Gastrocnemius medialis (tissue), 4 donors: ENCODE measurements at regions of chr4 and their contacts with region 1.

Region 1: DNA sequence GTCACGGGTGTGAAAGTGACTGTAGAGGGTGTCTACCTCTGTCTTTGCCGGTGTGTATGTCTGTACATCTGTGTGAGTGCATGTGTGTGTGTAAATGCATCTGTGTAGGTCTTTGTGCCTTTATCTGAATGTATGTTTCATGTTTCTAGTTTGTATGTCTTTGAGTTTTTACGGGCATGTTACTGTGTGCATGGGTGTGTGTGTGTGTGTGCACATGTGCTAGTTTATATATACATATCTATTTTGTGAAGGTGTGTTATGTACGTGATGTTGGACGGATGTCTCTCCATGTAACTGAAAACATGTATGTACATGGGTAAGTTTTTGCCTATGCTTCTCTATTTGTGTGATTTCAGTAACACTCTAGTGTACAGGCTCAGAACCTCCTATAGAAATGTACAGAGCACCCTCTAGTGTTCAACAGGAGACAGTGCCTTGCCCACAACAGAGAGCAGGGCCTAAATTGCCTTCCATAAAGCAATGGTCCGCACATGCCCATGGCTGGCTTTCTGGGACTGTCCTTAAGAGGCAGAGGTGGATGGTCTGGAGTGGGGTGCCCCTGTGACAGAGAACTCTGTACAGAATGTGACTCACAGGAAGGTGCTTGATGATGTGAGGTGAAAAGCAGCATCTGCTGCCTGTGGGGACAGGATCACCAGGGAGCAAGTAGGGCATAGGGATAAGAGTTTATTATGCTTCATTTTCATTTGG is 343.5 kb downstream of the RAPGEF2 start:
- DNase-seq: peak; percentile 16 to 35
- ATAC-seq: peak; percentile 96 to 100
- H3K4me3 ChIP-seq: no peak overlapping the region
- H3K27ac ChIP-seq: peak overlapping the region in 1 of 4 donors; percentile 13
- H3K4me1 ChIP-seq: peaks cover 0 to 5% of the 10 kb centered on the region in 2 donors
- H3K27me3 ChIP-seq: no peaks in the 10 kb centered on the region
- CTCF ChIP-seq: peak; percentile 62 to 85 (median 79)
- POLR2A ChIP-seq: no peak

Region 2: GRCh38 chr4:158253350-158253980 is 1193.0 kb before region 1 on chr4:
- in situ Hi-C with region 1: no loop called
- intact Hi-C with region 1: loop called (anchors 10 kb)
- DNase-seq: no peak
- ATAC-seq: peak; percentile 56 to 62
- H3K4me3 ChIP-seq: no peak overlapping the region
- H3K27ac ChIP-seq: no peak overlapping the region
- H3K4me1 ChIP-seq: no peaks in the 10 kb centered on the region
- H3K27me3 ChIP-seq: no peaks in the 10 kb centered on the region
- CTCF ChIP-seq: peak in 4 of 5 experiments; percentile 20 to 54 (median 42)
- POLR2A ChIP-seq: no peak

Region 3: DNA sequence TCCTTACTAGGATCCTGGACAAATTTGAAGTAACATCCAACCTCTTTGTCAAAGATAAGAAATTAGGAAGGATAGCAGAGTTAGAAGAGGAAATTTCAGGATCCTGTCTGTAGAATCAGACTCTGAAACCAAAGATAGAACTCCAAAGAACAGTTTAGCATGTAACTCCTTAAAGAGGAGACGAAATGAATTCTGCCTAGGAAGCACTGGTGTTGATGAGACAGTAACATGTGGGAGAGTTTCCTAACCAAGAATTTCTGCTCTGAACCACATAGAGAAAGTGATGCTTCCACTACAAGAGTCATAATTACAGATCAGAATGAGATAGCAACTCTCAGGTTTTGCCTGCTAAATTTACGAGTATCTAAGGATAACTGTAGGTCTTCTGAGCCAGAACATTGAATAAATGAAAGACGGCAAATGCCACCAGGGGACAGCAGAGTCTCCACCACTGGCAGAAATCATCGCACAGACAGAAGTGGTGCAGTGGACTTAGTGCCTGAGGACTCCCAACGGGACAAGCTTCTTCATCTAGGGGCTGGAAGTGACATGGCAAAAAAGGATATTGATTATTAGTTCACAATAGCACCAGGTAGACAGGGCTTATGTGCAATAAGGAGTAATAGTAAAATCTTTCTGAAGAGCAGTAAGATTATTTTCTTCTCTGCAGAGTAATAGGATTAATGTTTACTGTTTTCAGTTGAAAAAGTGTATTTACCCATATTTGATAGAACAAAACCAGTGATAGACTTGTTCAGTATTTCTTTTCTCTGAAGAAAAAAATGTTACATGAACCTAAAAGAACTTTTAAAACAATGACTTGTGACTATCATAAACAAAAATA is 716.5 kb before region 1 on chr4:
- in situ Hi-C with region 1: loop called in 3 of 4 experiments (anchors 25 kb)
- intact Hi-C with region 1: no loop called
- DNase-seq: peak; percentile 10 to 55
- ATAC-seq: peak; percentile 87 to 97
- H3K4me3 ChIP-seq: no peak overlapping the region
- H3K27ac ChIP-seq: no peak overlapping the region
- H3K4me1 ChIP-seq: no peaks in the 10 kb centered on the region
- H3K27me3 ChIP-seq: no peaks in the 10 kb centered on the region
- CTCF ChIP-seq: peak; percentile 82 to 95 (median 91)
- POLR2A ChIP-seq: no peak

Region 4: DNA sequence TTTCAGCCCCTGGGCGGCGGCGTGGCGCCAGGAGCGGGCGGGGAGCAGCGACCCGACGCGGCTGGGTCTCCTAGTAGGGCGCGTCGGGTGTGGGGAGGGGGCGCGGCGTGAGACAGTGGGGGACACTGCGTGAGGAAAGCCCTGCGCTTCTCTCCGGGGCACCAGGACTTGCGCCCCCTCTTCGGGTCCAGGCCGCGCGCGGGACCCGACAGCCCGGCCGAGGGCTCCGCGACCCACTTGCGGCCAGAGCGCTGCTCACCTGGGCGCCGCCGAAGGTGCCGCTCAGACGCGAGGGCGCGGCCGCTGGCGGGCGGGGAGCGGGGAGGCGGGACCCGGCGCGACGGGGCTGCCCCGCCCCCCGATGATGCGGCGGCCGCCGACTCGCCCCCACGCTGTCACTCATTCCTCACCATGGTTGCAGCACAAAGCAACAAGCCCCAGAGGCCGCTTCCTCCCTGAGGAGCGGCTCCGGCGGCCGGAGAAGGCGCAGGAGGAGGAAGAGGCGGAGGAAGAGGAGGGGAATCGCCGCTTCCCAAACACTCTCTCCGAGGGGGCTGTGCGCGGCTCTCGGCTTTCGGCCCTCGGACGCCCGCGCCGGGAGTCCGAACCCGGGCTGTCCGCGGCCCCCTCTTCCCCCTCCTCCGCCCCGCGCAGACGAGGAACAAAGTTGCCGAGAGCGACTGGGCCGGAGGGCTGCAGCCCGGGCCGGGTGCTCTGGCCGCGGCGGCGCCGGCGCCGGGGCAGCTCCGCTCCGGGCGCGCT is 343.6 kb before region 1 on chr4 and contains the start of gene RAPGEF2:
- in situ Hi-C with region 1: no loop called
- intact Hi-C with region 1: loop called (anchors 10 kb)
- DNase-seq: peak; percentile 90 to 92
- ATAC-seq: peak; percentile 93
- H3K4me3 ChIP-seq: peak within 1 kb of the TSS; percentile 67 to 97 (median 93)
- H3K27ac ChIP-seq: peak within 1 kb of the TSS; percentile 93 to 96 (median 95)
- H3K4me1 ChIP-seq: peaks cover 35 to 43% of the 10 kb centered on the region in 2 donors
- H3K27me3 ChIP-seq: no peaks in the 10 kb centered on the region
- CTCF ChIP-seq: peak in 1 of 5 experiments; percentile 10
- POLR2A ChIP-seq: peak; percentile 95 to 98
- total RNA-seq, gene RAPGEF2: 32.9 to 42.3 (median 38.7) TPM

Region 5: GRCh38 chr4:159273141-159273438 is 173.3 kb before region 1 on chr4:
- in situ Hi-C with region 1: no loop called
- intact Hi-C with region 1: loop called (anchors 10 kb)
- DNase-seq: no peak
- ATAC-seq: peak in 1 of 2 donors; percentile 22
- H3K4me3 ChIP-seq: no peak overlapping the region
- H3K27ac ChIP-seq: peak overlapping the region; percentile 19 to 61 (median 39)
- H3K4me1 ChIP-seq: peaks cover 48 to 49% of the 10 kb centered on the region in 2 donors
- H3K27me3 ChIP-seq: no peaks in the 10 kb centered on the region
- CTCF ChIP-seq: no peak
- POLR2A ChIP-seq: no peak

Region 6: DNA sequence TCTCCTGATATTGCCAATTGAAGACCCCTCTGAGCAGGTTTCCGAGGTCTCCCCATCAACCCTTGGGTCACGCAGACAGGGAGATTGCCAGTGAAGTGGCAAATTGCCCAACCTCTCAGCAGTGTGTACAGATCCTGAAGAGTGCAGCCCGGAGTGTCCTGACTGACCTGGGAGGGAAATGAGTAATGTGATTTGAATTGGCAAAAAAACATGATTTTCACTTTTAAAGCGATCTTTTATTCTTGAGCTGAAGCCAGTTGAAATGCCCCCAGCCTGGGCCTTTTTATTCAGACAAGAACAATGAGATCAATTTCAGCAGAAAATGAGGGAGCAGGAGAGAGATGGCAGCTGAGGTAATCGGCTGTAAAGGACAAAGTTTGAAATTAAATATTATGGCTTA is 58.3 kb after region 1 on chr4:
- in situ Hi-C with region 1: no loop called
- intact Hi-C with region 1: no loop called
- DNase-seq: no peak
- ATAC-seq: no peak
- H3K4me3 ChIP-seq: no peak overlapping the region
- H3K27ac ChIP-seq: no peak overlapping the region
- H3K4me1 ChIP-seq: no peaks in the 10 kb centered on the region
- H3K27me3 ChIP-seq: peaks cover 0 to 15% (median 10%) of the 10 kb centered on the region in 3 donors
- CTCF ChIP-seq: no peak
- POLR2A ChIP-seq: no peak

Region 7: DNA sequence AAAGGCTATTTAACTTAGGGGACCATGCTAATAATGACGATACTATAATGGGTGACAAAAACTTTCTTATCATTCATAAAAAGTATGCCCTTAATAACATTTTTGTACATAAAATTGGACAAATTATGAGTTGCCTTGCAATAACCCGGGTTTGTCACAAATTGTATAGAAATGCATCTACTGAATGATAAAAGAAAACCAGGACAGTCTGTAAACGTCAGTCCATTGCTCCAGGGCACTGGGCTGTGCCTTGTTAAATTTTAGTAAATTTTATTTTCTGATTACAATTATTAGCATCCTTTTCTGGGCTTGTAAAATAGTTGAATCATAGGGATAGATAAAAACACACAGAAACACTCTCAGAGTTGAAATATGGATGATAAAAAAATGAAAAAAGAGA is 434.7 kb after region 1 on chr4:
- in situ Hi-C with region 1: no loop called
- intact Hi-C with region 1: no loop called
- DNase-seq: no peak
- ATAC-seq: no peak
- H3K4me3 ChIP-seq: no peak overlapping the region
- H3K27ac ChIP-seq: no peak overlapping the region
- H3K4me1 ChIP-seq: no peaks in the 10 kb centered on the region
- H3K27me3 ChIP-seq: no peaks in the 10 kb centered on the region
- CTCF ChIP-seq: no peak
- POLR2A ChIP-seq: no peak